Pancreas (tissue), 10 donors: ENCODE measurements at regions of chr1 and their contacts with region 1.

Region 1: GRCh38 chr1:51997974-51998382 is 7.5 kb upstream of the RAB3B start:
- DNase-seq: no peak
- ATAC-seq: no peak
- H3K4me3 ChIP-seq: no peak overlapping the region
- H3K27ac ChIP-seq: no peak overlapping the region
- H3K4me1 ChIP-seq: no peaks in the 10 kb centered on the region
- H3K27me3 ChIP-seq: no peaks in the 10 kb centered on the region
- CTCF ChIP-seq: no peak

Region 2: DNA sequence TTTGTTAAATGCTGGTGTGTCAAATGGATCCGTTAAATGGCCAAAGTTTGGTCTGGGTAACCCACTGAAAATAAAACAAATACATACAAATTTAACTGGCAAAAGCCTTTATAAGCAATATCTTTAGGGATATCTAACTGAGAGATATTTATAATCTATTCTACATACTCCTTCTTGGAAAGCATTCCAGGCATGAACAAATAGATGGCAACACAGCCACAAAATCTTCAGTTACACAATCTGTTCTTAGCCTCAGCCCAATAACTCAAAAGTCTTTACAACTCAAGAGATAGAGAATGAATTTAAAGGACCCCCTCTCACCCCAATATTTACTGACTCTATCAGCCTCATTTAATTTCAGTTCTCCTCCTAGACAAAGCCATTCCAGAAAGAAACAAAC is 178.2 kb before region 1 on chr1:
- intact Hi-C with region 1: no loop called
- DNase-seq: no peak
- ATAC-seq: no peak
- H3K4me3 ChIP-seq: no peak overlapping the region
- H3K27ac ChIP-seq: no peak overlapping the region
- H3K4me1 ChIP-seq: no peaks in the 10 kb centered on the region
- H3K27me3 ChIP-seq: no peaks in the 10 kb centered on the region
- CTCF ChIP-seq: no peak

Region 3: DNA sequence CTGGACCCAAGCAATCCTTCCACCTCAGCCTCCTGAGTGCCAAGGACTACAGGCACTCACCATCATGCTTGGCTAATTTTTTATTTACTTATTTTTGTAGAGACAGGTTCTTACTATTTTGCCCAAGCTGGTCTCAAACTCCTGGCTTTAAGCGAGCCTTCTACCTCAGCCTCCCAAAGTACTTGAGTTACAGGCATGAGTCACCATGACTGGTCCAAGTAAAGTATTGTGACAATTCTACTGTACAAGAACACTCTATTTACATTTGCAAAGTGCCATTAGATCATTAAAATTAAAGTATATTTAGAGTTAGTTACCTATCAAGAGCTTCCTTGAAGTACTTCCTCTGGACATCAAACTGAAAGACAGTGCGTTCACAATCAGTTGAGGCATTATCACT is 164.3 kb before region 1 on chr1:
- intact Hi-C with region 1: no loop called
- DNase-seq: no peak
- ATAC-seq: no peak
- H3K4me3 ChIP-seq: no peak overlapping the region
- H3K27ac ChIP-seq: no peak overlapping the region
- H3K4me1 ChIP-seq: no peaks in the 10 kb centered on the region
- H3K27me3 ChIP-seq: no peaks in the 10 kb centered on the region
- CTCF ChIP-seq: no peak

Region 4: GRCh38 chr1:51901151-51901550 is 96.8 kb before region 1 on chr1:
- intact Hi-C with region 1: loop called in 2 of 3 experiments (anchors 5 to 10 kb)
- DNase-seq: no peak
- ATAC-seq: no peak
- H3K4me3 ChIP-seq: no peak overlapping the region
- H3K27ac ChIP-seq: no peak overlapping the region
- H3K4me1 ChIP-seq: no peaks in the 10 kb centered on the region
- H3K27me3 ChIP-seq: no peaks in the 10 kb centered on the region
- CTCF ChIP-seq: no peak